Activated T-helper 2 cell treated with anti-CD3 and anti-CD28 coated beads, Interferon-gamma antibody, Interleukin-2, Interleukin-4, amounts not matched to agents 10 μg/mL and 5 μg/mL and 100 μg/mL, durations not matched to agents 14 hours and 24 hours and 36 hours (primary cell): ENCODE measurements at regions of chr2 and their contacts with region 1.

Region 1: DNA sequence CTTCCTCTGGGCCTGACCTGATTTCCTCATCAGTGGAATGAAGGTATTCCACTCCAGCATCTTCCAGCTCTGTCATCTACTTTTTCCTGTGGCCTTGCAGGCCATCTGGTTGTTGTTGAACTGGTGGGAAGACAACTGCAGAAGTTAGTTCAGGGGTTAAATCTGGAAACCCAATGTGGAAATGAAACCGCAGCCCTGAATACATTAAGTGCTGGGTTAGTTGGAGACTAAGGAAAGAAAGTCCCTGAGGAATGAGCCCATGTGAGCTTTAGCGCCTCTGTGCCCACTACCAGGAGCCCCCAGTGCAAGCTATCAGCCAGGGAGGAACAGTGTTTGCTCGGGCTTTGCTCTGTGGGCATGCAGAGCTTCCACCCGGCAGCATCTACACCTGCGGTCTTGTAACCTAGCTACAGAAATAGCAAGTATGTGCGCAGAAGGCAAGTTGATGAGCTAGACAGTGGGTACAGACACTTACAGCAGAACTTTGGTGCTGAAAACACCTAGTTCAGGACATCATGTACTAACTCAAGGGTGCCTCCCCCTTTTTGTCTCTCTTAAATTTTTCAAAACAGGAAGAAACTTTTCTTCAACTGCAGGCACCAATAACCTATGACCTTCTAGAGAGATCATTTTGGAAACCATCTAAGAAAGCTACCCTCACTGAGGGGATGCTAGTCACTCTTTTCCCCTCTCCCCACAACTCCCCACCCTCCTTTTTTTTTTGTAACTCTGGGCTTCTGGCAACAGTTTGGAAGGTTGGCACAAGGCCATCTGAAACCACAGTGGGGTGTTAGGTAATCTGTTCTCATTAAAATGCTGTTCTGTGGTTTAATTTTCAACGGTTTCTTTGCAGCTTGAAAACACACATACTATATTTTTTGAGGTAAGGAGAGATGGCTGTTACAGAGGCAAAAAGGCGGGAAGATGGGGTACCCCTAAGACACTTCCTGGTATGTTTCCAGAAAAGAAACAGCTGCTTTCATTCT is 18.3 kb upstream of the CXCR4 start:
- DNase-seq: peak; percentile 47
- H3K4me3 Mint-ChIP-seq: peak overlapping the region; percentile 13
- H3K27ac Mint-ChIP-seq: no peak overlapping the region
- H3K4me1 Mint-ChIP-seq: peaks cover 74% of the 10 kb centered on the region
- H3K27me3 Mint-ChIP-seq: peaks cover 33% of the 10 kb centered on the region

Region 2: DNA sequence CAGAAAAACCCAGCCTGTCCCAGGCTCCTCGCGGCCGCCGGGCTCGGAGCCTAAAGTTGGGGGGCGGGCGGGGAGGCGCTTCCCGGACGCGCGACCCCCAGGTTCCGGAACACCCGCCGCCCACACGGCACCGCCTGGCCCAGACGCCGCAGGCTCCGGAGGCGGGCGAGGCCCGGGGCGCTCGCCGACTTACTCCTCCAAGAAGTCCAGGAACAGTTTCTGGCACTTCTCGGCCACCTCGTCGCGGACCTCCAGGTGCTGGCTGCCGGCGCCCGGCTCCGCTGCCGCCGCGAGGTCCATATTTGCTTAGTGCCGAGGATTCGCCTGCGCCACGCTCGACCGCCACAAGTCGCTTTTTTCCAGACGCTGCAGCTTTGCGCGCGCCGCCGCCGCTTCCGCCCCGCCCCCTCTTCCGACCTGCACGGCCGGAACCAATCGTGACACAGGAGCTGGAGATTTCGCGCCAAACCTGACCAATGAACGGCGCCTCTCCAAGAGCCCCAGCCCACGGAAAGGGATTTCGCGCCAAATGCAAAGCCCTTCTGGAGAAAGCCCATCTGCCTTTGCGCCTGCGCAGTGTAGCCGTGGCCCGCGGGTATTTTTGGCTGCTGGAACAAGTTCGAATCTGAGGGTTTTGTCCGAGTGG is 260.0 kb before region 1 on chr2 and contains the start of gene MCM6:
- intact Hi-C with region 1: loop called (anchors 5 kb)
- DNase-seq: peak; percentile 98
- H3K4me3 Mint-ChIP-seq: peak within 1 kb of the TSS; percentile 95
- H3K27ac Mint-ChIP-seq: peak within 1 kb of the TSS; percentile 92
- H3K4me1 Mint-ChIP-seq: peaks cover 37% of the 10 kb centered on the region
- H3K27me3 Mint-ChIP-seq: no peaks in the 10 kb centered on the region
- total RNA-seq, gene MCM6: 190 and 191 TPM in 2 replicates

Region 3: GRCh38 chr2:135960656-135961551 is 175.3 kb before region 1 on chr2:
- intact Hi-C with region 1: loop called (anchors 2 kb)
- DNase-seq: peak; percentile 32
- H3K4me3 Mint-ChIP-seq: peak overlapping the region; percentile 66
- H3K27ac Mint-ChIP-seq: peak overlapping the region; percentile 96
- H3K4me1 Mint-ChIP-seq: peaks cover 57% of the 10 kb centered on the region
- H3K27me3 Mint-ChIP-seq: no peaks in the 10 kb centered on the region

Region 4: GRCh38 chr2:136059036-136059472 is 77.2 kb before region 1 on chr2:
- intact Hi-C with region 1: loop called (anchors 1 kb)
- DNase-seq: no peak
- H3K4me3 Mint-ChIP-seq: no peak overlapping the region
- H3K27ac Mint-ChIP-seq: peak overlapping the region; percentile 5
- H3K4me1 Mint-ChIP-seq: peaks cover 56% of the 10 kb centered on the region
- H3K27me3 Mint-ChIP-seq: no peaks in the 10 kb centered on the region

Region 5: DNA sequence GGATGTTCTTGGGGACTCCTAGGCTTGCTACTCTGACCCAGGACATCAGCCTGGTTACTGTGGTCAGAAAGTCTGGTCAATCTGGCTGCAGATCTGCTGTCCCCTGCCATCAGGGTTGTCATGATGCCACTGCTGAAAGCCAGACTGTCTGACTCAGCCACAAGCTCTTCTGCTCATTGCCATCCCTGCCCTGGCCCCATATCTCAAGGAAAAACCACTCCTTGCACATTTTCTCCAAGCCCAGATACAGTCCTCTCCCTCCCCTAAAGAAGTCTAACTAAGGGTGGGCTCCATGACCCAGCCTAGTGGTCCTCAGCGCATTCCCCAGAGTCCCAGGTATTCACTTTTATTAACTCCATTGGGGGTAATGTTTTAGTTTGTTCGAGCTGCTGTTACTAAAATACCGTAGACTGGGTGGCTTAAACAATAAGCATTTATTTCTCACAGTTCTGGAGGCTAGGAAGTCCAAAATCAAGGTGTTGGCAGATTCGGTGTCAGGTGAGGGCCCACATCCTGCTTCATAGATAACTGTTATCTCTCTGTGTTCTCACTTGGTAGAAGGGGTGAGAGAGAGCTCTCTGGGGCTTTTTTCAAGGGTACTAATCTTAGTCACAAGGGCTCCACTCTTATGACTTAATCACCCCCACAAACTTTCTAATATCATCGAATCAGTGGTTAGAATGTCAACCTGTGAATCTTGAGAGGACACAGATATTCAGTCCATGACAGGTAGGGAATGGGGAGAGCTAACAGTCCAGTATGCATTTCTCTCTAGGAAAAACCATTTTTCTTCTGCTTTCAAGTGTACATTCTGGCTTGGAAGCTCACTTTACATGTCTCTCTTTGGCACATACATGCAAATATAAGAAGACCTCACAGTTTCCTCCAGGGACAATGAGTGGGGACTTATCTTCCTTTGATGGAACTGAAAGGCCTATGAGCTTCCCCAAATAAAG is 76.5 kb after region 1 on chr2:
- intact Hi-C with region 1: loop called (anchors 1 kb)
- DNase-seq: no peak
- H3K4me3 Mint-ChIP-seq: no peak overlapping the region
- H3K27ac Mint-ChIP-seq: peak overlapping the region; percentile 52
- H3K4me1 Mint-ChIP-seq: peaks cover 46% of the 10 kb centered on the region
- H3K27me3 Mint-ChIP-seq: peaks cover 1% of the 10 kb centered on the region

Region 6: DNA sequence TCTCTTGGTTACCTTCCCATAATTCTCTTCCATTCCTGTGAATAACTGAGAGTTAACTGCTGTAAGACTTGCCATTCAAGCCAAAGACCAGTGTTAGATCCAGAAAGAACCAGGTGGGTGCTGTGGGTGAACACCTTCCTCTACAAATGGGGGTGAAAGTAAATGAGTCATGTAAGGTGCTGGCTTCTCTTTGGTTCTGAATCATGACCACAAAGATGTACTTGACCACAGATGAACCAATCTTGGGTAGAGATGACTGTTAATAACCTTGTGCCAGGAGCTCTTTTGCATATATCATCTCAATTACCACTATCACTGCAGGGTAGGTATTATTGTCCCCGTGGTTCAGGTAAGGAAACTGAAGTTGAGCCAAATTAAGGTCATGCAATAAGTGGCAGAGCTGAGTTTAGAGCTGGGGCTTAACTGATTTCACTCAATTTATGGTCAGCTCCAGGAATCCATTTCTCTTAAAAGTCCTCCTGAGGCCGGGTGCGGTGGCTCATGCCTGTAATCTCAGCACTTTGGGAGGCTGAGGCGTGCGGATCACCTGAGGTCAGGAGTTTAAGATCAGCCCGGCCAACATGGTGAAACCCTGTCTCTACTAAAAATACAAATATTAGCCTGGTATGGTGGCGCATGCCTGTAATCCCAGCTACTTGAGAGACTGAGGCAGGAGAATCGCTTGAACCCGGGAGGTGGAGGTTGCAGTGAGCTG is 226.6 kb after region 1 on chr2:
- intact Hi-C with region 1: loop called (anchors 1 kb)
- DNase-seq: no peak
- H3K4me3 Mint-ChIP-seq: peak overlapping the region; percentile 2
- H3K27ac Mint-ChIP-seq: peak overlapping the region; percentile 35
- H3K4me1 Mint-ChIP-seq: peaks cover 49% of the 10 kb centered on the region
- H3K27me3 Mint-ChIP-seq: peaks cover 1% of the 10 kb centered on the region